Naive thymus-derived CD4-positive, alpha-beta T cell (primary cell): ENCODE measurements at regions of chr1 and their contacts with region 1.

Region 1: GRCh38 chr1:95233737-95234500 is at the start of gene RWDD3:
- DNase-seq: peak; percentile 86 to 96 (median 93)
- ATAC-seq: peak; percentile 98
- H3K4me3 ChIP-seq: peak within 1 kb of the TSS; percentile 78
- H3K4me3 Mint-ChIP-seq: peak within 1 kb of the TSS; percentile 89 to 97 (median 92)
- H3K27ac ChIP-seq: peak within 1 kb of the TSS; percentile 79
- H3K27ac Mint-ChIP-seq: peak within 1 kb of the TSS; percentile 86 to 97 (median 91)
- H3K4me1 ChIP-seq: peaks cover 6 to 12% of the 10 kb centered on the region in 2 donors
- H3K4me1 Mint-ChIP-seq: peaks cover 23 to 54% (median 46%) of the 10 kb centered on the region in 7 donors
- H3K27me3 ChIP-seq: no peaks in the 10 kb centered on the region
- H3K27me3 Mint-ChIP-seq: peaks cover 16 to 30% (median 23%) of the 10 kb centered on the region in 5 donors
- total RNA-seq, gene RWDD3: 9.1 to 27.9 (median 20.0) TPM

Region 2: DNA sequence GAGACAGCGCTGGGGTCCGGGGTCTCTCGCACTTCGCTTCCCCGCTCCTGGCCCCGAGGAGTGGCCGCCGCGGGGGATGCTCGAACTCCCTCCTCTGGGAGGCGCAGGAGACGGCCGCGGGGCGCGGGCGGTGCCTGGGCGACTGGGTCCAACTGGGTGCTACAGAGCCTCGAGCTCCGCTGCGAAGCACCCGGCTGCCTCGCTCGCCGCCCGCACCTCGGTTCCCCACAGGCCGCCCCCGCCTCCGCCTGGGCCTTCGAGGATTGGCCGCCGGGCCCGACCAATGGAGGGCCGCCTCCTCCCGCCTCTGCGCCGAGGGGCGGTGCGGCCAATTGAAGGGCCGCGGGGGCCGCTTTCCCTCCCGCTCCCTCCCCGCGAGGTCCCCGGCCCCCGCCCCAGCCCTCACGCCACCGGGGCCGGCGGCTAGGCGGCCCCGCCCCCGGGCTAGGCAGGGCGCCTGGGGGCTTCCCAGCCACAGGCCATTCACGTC is 307.0 kb before region 1 on chr1 and contains the start of gene CNN3:
- CTCF ChIA-PET with region 1: no interaction called
- POLR2A ChIA-PET with region 1: no interaction called
- intact Hi-C with region 1: loop called in 1 of 2 experiments (anchors 1 kb)
- DNase-seq: peak; percentile 56 to 78 (median 68)
- ATAC-seq: peak; percentile 91
- H3K4me3 ChIP-seq: peak within 1 kb of the TSS; percentile 39
- H3K4me3 Mint-ChIP-seq: peak within 1 kb of the TSS; percentile 88 to 97 (median 94)
- H3K27ac ChIP-seq: peak within 1 kb of the TSS; percentile 63
- H3K27ac Mint-ChIP-seq: peak within 1 kb of the TSS; percentile 37 to 92 (median 84)
- H3K4me1 ChIP-seq: no peaks in the 10 kb centered on the region
- H3K4me1 Mint-ChIP-seq: peaks cover 12 to 38% (median 34%) of the 10 kb centered on the region in 7 donors
- H3K27me3 ChIP-seq: no peaks in the 10 kb centered on the region
- H3K27me3 Mint-ChIP-seq: peaks cover 18 to 57% (median 26%) of the 10 kb centered on the region in 5 donors
- total RNA-seq, gene CNN3: 4.4 to 14.9 (median 7.4) TPM

Region 3: GRCh38 chr1:95084317-95085176 is 149.4 kb before region 1 on chr1:
- CTCF ChIA-PET with region 1: interaction called, 8 read pairs
- POLR2A ChIA-PET with region 1: interaction called, 5 read pairs
- intact Hi-C with region 1: loop called (anchors 1 kb)
- DNase-seq: peak in 7 of 9 donors; percentile 7 to 26 (median 20)
- ATAC-seq: peak; percentile 72
- H3K4me3 ChIP-seq: no peak overlapping the region
- H3K4me3 Mint-ChIP-seq: no peak overlapping the region
- H3K27ac ChIP-seq: no peak overlapping the region
- H3K27ac Mint-ChIP-seq: no peak overlapping the region
- H3K4me1 ChIP-seq: no peaks in the 10 kb centered on the region
- H3K4me1 Mint-ChIP-seq: peaks cover 0 to 4% (median 0%) of the 10 kb centered on the region in 7 donors
- H3K27me3 ChIP-seq: no peaks in the 10 kb centered on the region
- H3K27me3 Mint-ChIP-seq: peaks cover 0 to 29% (median 18%) of the 10 kb centered on the region in 5 donors

Region 4: DNA sequence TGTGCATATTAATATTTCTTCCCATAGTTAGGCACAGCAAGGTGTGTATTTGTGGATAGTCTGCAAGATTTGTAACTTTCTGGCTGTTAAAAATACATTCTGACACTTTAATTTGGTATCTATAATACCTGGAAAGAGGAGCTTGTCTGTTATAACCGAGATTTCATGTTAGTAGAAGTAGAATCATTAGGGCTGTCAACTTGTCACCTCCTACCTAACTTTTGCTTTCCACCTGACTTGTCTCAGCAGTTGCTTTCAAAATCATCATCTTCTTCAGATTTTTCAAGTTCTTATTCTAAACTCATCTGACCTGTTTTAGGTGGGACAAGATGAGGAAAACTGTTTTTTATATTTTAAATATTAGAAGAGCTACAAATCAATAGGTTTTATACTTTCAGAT is 11.1 kb after region 1 on chr1:
- CTCF ChIA-PET with region 1: interaction called, 5 read pairs
- POLR2A ChIA-PET with region 1: interaction called, 10 read pairs
- intact Hi-C with region 1: no loop called
- DNase-seq: no peak
- ATAC-seq: no peak
- H3K4me3 ChIP-seq: no peak overlapping the region
- H3K4me3 Mint-ChIP-seq: no peak overlapping the region
- H3K27ac ChIP-seq: no peak overlapping the region
- H3K27ac Mint-ChIP-seq: peak overlapping the region in 1 of 9 donors; percentile 34
- H3K4me1 ChIP-seq: no peaks in the 10 kb centered on the region
- H3K4me1 Mint-ChIP-seq: peaks cover 0 to 47% (median 30%) of the 10 kb centered on the region in 7 donors
- H3K27me3 ChIP-seq: no peaks in the 10 kb centered on the region
- H3K27me3 Mint-ChIP-seq: no peaks in the 10 kb centered on the region